Caco-2 (cell line): ENCODE measurements at regions of chr20 and their contacts with region 1.

Region 1: DNA sequence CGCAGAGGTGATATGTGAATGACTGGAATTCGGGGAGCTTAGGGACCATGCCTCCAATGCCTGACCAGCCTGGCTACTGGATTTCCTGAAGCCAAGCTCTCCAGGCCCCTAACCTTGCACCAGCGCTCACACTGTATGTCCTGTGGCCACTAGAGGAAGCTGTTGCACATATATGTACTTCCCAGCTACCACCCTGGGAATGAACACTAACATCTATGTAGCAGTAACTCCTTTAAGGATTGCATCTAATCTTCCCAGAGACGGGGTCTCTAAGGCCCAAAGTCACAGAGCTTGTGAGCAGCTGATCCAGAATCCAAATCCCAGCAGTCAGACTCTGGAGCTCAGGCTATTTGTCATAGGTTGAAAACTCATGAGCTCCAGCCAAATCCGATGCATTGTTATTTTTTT is 20.4 kb upstream of the BPIFB1 start:
- DNase-seq: peak; percentile 70 to 80
- H3K4me3 ChIP-seq: no peak overlapping the region
- H3K4me3 Mint-ChIP-seq: no peak overlapping the region
- H3K27ac Mint-ChIP-seq: no peak overlapping the region
- H3K4me1 ChIP-seq: no peaks in the 10 kb centered on the region
- H3K4me1 Mint-ChIP-seq: no peaks in the 10 kb centered on the region
- H3K27me3 ChIP-seq: peaks cover 2% of the 10 kb centered on the region; the same call in 1 of the 2 replicates
- H3K27me3 Mint-ChIP-seq: peaks cover 11% of the 10 kb centered on the region
- CTCF ChIP-seq: peak; percentile 80 to 98

Region 2: GRCh38 chr20:33291830-33292355 is 29.2 kb after region 1 on chr20:
- CTCF ChIA-PET with region 1: interaction called, 9 read pairs
- POLR2A ChIA-PET with region 1: no interaction called
- intact Hi-C with region 1: loop called (anchors 1 kb)
- DNase-seq: peak; percentile 74 to 84
- H3K4me3 ChIP-seq: no peak overlapping the region
- H3K4me3 Mint-ChIP-seq: no peak overlapping the region
- H3K27ac Mint-ChIP-seq: no peak overlapping the region
- H3K4me1 ChIP-seq: no peaks in the 10 kb centered on the region
- H3K4me1 Mint-ChIP-seq: no peaks in the 10 kb centered on the region
- H3K27me3 ChIP-seq: no peaks in the 10 kb centered on the region
- H3K27me3 Mint-ChIP-seq: peaks cover 35% of the 10 kb centered on the region
- CTCF ChIP-seq: peak; percentile 99 to 100

Region 3: DNA sequence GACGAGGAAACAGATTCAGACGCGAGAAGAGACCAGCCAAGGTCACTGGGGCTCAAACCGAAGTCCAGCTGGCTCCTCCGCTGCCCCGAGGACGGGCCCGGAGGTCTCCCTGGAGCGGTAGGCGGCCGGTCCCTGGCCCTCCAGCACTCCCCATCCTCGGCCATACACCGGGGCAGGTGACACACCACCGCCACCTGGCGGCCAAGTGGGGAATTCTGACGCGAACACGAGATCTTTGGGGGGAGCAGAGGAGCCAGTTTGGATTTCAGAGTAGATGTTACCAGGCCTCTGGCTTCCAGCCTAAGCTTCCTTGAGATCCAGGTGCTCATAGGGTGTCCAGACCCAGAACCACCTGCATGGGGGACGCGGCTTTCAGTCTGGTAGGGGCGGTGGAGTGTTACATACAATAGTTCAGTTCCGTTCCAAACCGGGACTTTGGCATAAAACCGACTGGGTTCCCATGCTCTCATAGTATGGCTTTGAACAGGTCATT is 36.5 kb after region 1 on chr20:
- CTCF ChIA-PET with region 1: interaction called, 5 read pairs
- POLR2A ChIA-PET with region 1: no interaction called
- intact Hi-C with region 1: loop called (anchors 1 kb)
- DNase-seq: peak; percentile 86 to 93
- H3K4me3 ChIP-seq: no peak overlapping the region
- H3K4me3 Mint-ChIP-seq: no peak overlapping the region
- H3K27ac Mint-ChIP-seq: no peak overlapping the region
- H3K4me1 ChIP-seq: no peaks in the 10 kb centered on the region
- H3K4me1 Mint-ChIP-seq: no peaks in the 10 kb centered on the region
- H3K27me3 ChIP-seq: no peaks in the 10 kb centered on the region; the same call in 1 of the 2 replicates
- H3K27me3 Mint-ChIP-seq: peaks cover 25% of the 10 kb centered on the region
- CTCF ChIP-seq: peak; percentile 100